ENCODE measurements at regions of chr17 and their contacts with region 1.

Region 1: GRCh38 chr17:28371245-28372202 is at the start of gene SARM1:
- DNase-seq: peak; percentile 90
- ATAC-seq: peak; percentile 90
- H3K4me3 ChIP-seq: peak within 1 kb of the TSS; percentile 43 to 81 (median 74)
- H3K4me3 Mint-ChIP-seq: peak within 1 kb of the TSS; percentile 99
- H3K27ac ChIP-seq: peak within 1 kb of the TSS; percentile 71 to 72
- H3K27ac Mint-ChIP-seq: peak within 1 kb of the TSS; percentile 96
- H3K4me1 ChIP-seq: peaks cover 14 to 23% of the 10 kb centered on the region in 2 donors
- H3K4me1 Mint-ChIP-seq: peaks cover 22% of the 10 kb centered on the region
- H3K27me3 ChIP-seq: no peaks in the 10 kb centered on the region
- H3K27me3 Mint-ChIP-seq: no peaks in the 10 kb centered on the region
- CTCF ChIP-seq: no peak
- total RNA-seq, gene SARM1: 28.0 and 32.8 TPM in 2 replicates

Region 2: GRCh38 chr17:28318759-28319660 is 52.5 kb before region 1 on chr17 and contains the start of gene TMEM97:
- CTCF ChIA-PET with region 1: no interaction called
- POLR2A ChIA-PET with region 1: no interaction called
- intact Hi-C with region 1: loop called (anchors 1 kb)
- DNase-seq: peak; percentile 96
- ATAC-seq: peak; percentile 99
- H3K4me3 ChIP-seq: peak within 1 kb of the TSS; percentile 49 to 83 (median 67)
- H3K4me3 Mint-ChIP-seq: peak within 1 kb of the TSS; percentile 88
- H3K27ac ChIP-seq: peak within 1 kb of the TSS; percentile 8 to 37
- H3K27ac Mint-ChIP-seq: peak within 1 kb of the TSS; percentile 88
- H3K4me1 ChIP-seq: peaks cover 13 to 22% of the 10 kb centered on the region in 2 donors
- H3K4me1 Mint-ChIP-seq: peaks cover 22% of the 10 kb centered on the region
- H3K27me3 ChIP-seq: no peaks in the 10 kb centered on the region
- H3K27me3 Mint-ChIP-seq: no peaks in the 10 kb centered on the region
- CTCF ChIP-seq: no peak
- total RNA-seq, gene TMEM97: 5.4 and 6.4 TPM in 2 replicates

Region 3: DNA sequence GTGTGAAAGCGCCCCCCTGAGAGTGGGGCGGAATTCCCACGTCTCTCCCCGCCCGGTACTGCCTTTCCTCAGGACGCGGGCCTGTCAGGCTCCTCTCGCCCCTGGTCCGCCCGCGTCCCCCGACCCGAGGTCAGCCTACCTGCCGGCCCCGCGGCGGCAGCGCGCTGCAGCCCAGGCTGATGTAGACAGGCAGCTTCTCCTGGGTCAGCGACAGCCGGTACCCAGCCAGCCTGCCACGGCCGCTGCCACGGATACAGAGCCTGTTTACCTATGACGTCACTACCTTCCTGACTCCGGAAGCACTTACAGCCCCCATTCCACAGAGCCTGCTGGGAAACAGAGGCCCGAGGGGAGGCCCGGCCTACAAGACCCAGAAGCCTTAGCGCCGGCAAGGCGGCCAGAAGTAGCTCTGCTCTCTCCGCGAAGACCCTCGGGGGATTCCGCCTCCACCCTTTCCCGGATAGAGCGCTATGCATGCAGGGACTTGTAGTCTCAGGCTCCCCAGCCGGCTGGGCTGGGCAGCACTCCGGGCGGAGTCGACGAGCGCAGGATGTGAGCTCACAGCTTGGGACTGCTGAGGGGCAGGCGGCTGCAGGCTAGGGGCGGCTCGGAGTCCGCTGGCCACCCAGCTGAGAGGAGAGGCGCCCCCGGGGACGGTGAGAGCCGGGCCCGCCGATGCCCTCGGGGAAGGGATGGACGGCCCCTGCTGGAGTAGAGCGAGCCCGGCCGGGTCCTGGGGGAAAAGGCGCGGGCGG is 36.1 kb before region 1 on chr17 and contains the starts of genes IFT20 and TNFAIP1:
- CTCF ChIA-PET with region 1: interaction called, 6 read pairs
- POLR2A ChIA-PET with region 1: interaction called, 5 read pairs
- intact Hi-C with region 1: loop called (anchors 1 kb)
- DNase-seq: peak; percentile 99
- ATAC-seq: peak; percentile 96
- H3K4me3 ChIP-seq: peak within 1 kb of the TSS; percentile 72 to 89 (median 82)
- H3K4me3 Mint-ChIP-seq: peak within 1 kb of the TSS; percentile 93
- H3K27ac ChIP-seq: peak within 1 kb of the TSS; percentile 82 to 95
- H3K27ac Mint-ChIP-seq: peak within 1 kb of the TSS; percentile 91
- H3K4me1 ChIP-seq: peaks cover 19 to 24% of the 10 kb centered on the region in 2 donors
- H3K4me1 Mint-ChIP-seq: peaks cover 35% of the 10 kb centered on the region
- H3K27me3 ChIP-seq: no peaks in the 10 kb centered on the region
- H3K27me3 Mint-ChIP-seq: no peaks in the 10 kb centered on the region
- CTCF ChIP-seq: no peak
- total RNA-seq, gene IFT20: 33.5 and 35.9 TPM in 2 replicates
- total RNA-seq, gene TNFAIP1: 19.0 and 20.4 TPM in 2 replicates

Region 4: DNA sequence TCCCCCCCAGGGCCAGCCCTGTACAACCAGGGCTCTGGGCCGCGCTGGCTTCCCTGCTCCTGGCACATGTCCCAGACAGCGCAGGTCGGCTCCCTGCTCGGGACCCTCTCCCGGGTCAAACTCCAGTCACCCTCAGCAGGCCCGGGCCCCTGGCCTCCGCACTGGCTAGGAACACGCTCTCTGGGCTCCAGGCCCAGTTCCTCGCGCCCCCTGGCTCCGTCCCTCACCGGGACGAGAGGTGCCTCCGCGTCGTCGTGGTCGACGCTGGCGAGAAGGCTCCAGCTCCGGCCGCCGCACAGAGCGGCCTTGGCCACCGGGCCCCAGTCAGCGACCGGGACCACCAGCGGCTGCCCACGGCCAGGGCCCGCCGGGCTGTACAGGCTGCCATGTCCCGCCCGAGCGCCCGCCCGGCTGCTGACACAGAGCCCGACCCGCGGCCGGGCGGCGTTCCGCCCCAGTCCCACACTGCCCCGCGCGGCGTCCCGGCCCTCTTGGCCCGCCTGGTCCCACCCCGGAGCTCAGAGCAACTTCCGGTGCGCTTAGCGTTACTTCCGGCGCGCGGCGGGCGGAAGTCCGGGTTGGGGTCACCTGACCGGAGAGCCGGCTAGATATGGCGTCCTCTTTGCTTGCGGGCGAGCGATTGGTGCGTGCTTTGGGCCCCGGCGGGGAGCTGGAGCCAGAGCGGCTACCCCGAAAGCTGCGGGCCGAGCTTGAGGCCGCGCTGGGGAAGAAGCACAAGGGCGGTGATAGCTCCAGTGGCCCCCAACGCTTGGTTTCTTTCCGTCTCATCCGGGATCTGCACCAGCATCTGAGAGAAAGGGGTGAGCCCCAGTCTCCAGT is 14.2 kb before region 1 on chr17 and contains the start of gene POLDIP2:
- CTCF ChIA-PET with region 1: interaction called, 19 read pairs
- POLR2A ChIA-PET with region 1: interaction called, 8 read pairs
- intact Hi-C with region 1: loop called (anchors 1 kb)
- DNase-seq: peak; percentile 96
- ATAC-seq: peak; percentile 98
- H3K4me3 ChIP-seq: peak within 1 kb of the TSS; percentile 74 to 91 (median 81)
- H3K4me3 Mint-ChIP-seq: peak within 1 kb of the TSS; percentile 97
- H3K27ac ChIP-seq: peak within 1 kb of the TSS; percentile 67 to 83
- H3K27ac Mint-ChIP-seq: peak within 1 kb of the TSS; percentile 97
- H3K4me1 ChIP-seq: peaks cover 17 to 22% of the 10 kb centered on the region in 2 donors
- H3K4me1 Mint-ChIP-seq: peaks cover 22% of the 10 kb centered on the region
- H3K27me3 ChIP-seq: no peaks in the 10 kb centered on the region
- H3K27me3 Mint-ChIP-seq: no peaks in the 10 kb centered on the region
- CTCF ChIP-seq: peak; percentile 22
- total RNA-seq, gene POLDIP2: 29.7 and 35.7 TPM in 2 replicates

Region 5: GRCh38 chr17:28384281-28385036 is 12.9 kb after region 1 on chr17:
- CTCF ChIA-PET with region 1: no interaction called
- POLR2A ChIA-PET with region 1: interaction called, 8 read pairs
- intact Hi-C with region 1: loop called (anchors 2 kb)
- DNase-seq: peak; percentile 53
- ATAC-seq: peak; percentile 81
- H3K4me3 ChIP-seq: peak overlapping the region; percentile 30 to 74 (median 56)
- H3K4me3 Mint-ChIP-seq: peak overlapping the region; percentile 92
- H3K27ac ChIP-seq: no peak overlapping the region
- H3K27ac Mint-ChIP-seq: peak overlapping the region; percentile 15
- H3K4me1 ChIP-seq: peaks cover 16 to 20% of the 10 kb centered on the region in 2 donors
- H3K4me1 Mint-ChIP-seq: peaks cover 26% of the 10 kb centered on the region
- H3K27me3 ChIP-seq: peaks cover 0 to 32% (median 2%) of the 10 kb centered on the region in 4 experiments
- H3K27me3 Mint-ChIP-seq: peaks cover 27% of the 10 kb centered on the region
- CTCF ChIP-seq: no peak

Region 6: DNA sequence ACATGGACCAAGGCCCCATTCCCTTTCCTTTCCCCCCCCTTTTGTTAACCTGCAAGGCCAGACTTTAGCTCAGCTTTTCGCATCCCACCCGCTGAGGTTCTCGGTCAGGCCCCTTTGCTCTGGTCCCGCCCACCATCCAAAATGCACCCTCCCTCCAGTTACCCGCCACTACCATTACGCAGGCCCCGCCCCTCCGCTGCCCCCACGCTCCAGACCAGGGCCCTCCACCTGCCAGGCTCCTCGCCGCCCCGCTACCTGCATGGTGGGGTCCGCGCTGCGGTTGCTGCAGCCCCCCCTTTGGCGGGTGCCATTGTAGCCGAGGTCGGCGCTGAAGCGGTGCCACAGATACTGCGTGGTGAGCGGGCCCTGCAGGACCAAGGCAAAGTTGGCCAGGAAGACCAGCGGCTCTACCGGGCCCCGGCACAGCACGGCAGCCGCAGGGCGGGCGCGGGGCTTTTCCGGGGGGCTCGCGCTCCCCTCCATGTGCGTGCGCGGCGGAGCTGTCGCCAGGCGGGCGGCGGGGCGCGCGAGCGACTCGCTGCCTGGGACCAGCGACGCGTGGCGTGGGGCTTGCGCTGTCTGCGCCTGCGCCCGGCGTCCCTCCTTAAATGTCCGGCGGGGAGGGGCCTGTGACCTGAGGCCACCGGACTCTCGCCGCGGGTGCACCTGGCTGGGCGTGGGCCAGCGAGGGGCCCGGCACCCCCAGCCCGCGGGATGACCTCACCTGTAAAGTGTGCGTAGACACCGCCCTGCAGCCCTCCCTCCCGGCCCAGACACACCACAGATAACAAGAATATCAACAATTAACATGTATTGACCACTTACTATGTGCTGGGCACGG is 34.3 kb after region 1 on chr17 and contains the start of gene SLC46A1:
- CTCF ChIA-PET with region 1: interaction called, 3 read pairs
- POLR2A ChIA-PET with region 1: no interaction called
- intact Hi-C with region 1: loop called (anchors 5 kb)
- DNase-seq: peak; percentile 59
- ATAC-seq: peak; percentile 91
- H3K4me3 ChIP-seq: peak within 1 kb of the TSS in 4 of 5 experiments; percentile 58 to 91 (median 75)
- H3K4me3 Mint-ChIP-seq: peak within 1 kb of the TSS; percentile 90
- H3K27ac ChIP-seq: peak within 1 kb of the TSS in 1 of 2 donors; percentile 5
- H3K27ac Mint-ChIP-seq: peak within 1 kb of the TSS; percentile 81
- H3K4me1 ChIP-seq: peaks cover 8 to 12% of the 10 kb centered on the region in 2 donors
- H3K4me1 Mint-ChIP-seq: peaks cover 10% of the 10 kb centered on the region
- H3K27me3 ChIP-seq: no peaks in the 10 kb centered on the region
- H3K27me3 Mint-ChIP-seq: peaks cover 7% of the 10 kb centered on the region
- CTCF ChIP-seq: no peak
- total RNA-seq, gene SLC46A1: 4.3 and 5.0 TPM in 2 replicates